Right cardiac atrium (tissue), 5 donors: ENCODE measurements at regions of chr7 and their contacts with region 1.

Region 1: DNA sequence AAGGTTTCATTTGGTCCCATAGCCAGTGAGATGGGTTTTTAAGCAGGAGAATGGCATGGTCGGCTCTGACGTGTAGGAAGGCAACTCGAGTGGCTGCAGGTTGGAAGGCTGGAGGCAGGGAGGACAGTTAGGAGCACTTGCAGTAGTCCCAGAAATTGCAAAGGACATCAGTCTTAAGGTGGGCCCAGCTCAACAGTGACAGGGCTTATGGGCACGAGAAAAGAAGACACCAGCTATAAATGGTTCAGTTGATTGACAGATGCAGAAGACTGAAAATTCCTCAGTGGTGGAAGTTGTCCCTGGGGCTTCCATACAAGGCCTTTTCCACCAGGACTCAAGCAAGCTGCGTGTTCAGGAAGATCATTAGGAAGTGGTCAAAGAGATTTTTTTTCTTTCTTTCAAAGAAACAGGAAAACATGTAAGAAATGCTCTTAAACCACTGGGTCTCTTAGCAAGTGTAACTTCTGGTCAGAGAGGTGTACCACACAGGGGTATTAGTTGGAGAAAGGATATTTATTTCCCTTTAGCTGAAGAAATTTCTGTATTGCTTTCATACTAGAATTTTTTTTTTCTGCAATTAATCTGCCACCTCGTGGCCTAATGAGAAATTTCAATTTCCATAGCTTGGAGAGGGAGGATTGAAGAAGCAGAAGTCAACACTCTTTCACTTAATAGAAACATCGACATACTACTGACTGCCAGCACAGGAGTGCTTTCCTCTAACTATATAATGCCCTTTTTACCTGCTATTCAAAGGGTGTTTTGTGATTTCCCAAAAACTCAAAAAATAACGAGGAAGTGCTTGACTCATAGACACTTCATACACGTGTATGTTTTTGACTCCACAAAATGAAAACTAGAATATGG is 177.4 kb upstream of the NAMPT start:
- DNase-seq: no peak
- ATAC-seq: peak; percentile 42 to 53
- H3K4me3 ChIP-seq: no peak overlapping the region
- H3K27ac ChIP-seq: no peak overlapping the region
- H3K4me1 ChIP-seq: no peaks in the 10 kb centered on the region
- H3K27me3 ChIP-seq: no peaks in the 10 kb centered on the region

Region 2: GRCh38 chr7:106285051-106285854 is 177.0 kb before region 1 on chr7:
- intact Hi-C with region 1: loop called in 2 of 4 experiments (anchors 10 kb)
- DNase-seq: peak; percentile 99 to 100 (median 99)
- ATAC-seq: peak; percentile 97 to 98
- H3K4me3 ChIP-seq: peak overlapping the region; percentile 88
- H3K27ac ChIP-seq: peak overlapping the region; percentile 96
- H3K4me1 ChIP-seq: no peaks in the 10 kb centered on the region
- H3K27me3 ChIP-seq: no peaks in the 10 kb centered on the region

Region 3: GRCh38 chr7:107874605-107875446 is 1412.6 kb after region 1 on chr7:
- intact Hi-C with region 1: no loop called
- DNase-seq: no peak
- ATAC-seq: peak; percentile 82 to 88
- H3K4me3 ChIP-seq: no peak overlapping the region
- H3K27ac ChIP-seq: no peak overlapping the region
- H3K4me1 ChIP-seq: no peaks in the 10 kb centered on the region
- H3K27me3 ChIP-seq: no peaks in the 10 kb centered on the region